Activated B cell treated with CpG ODN at 0.5 μM for 24 hours (primary cell): ENCODE measurements at regions of chr5 and their contacts with region 1.

Region 1: DNA sequence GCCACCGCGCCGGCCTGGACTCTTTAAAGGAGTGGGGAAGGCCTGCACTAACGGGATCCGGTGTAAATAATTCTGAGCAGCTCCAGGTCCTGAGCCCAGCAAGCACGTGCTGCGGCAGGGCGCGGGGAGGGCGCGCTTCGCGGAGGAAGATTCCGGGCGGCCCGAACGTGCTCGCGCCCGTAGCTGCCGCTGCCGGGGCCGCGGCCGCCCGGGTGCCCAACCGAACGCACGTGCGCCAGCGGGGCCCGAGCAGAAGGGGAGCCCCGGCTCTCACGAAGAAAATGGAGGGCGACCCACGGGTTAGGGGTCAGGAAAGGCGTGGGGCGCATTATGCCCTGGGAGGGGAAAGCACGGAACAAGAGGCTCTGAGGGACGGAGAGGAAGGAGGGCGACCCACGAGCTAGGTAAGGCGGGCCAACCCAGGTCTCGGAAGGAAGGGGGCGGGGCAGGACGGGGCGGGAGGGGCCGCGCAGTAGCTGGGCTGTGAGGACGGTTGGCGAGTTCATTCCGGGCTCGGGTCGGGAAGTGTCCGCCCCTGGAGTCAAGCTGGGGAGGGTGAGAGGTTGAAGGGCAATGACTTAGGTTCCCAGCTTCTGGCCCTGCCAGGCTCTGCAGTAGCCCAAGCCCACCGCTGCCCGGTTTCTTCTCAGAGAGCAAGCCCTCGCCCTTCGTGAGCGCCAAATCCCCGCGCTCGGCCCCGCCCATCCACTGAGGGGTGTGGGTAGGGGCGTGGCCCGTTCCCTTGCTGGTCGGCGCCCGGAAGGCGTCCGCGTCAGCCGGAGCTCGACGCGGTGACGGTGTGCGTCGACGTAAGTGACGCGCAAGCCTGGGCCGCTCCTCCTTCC is at the start of gene ZNF131:
- DNase-seq: peak; percentile 99
- ATAC-seq: peak; percentile 86
- H3K4me3 Mint-ChIP-seq: peak within 1 kb of the TSS; percentile 90
- H3K27ac Mint-ChIP-seq: peak within 1 kb of the TSS; percentile 94
- H3K4me1 Mint-ChIP-seq: peaks cover 38% of the 10 kb centered on the region
- H3K27me3 Mint-ChIP-seq: no peaks in the 10 kb centered on the region
- CTCF ChIP-seq: no peak
- total RNA-seq, gene ZNF131: 50.8 and 57.6 TPM in 2 replicates

Region 2: DNA sequence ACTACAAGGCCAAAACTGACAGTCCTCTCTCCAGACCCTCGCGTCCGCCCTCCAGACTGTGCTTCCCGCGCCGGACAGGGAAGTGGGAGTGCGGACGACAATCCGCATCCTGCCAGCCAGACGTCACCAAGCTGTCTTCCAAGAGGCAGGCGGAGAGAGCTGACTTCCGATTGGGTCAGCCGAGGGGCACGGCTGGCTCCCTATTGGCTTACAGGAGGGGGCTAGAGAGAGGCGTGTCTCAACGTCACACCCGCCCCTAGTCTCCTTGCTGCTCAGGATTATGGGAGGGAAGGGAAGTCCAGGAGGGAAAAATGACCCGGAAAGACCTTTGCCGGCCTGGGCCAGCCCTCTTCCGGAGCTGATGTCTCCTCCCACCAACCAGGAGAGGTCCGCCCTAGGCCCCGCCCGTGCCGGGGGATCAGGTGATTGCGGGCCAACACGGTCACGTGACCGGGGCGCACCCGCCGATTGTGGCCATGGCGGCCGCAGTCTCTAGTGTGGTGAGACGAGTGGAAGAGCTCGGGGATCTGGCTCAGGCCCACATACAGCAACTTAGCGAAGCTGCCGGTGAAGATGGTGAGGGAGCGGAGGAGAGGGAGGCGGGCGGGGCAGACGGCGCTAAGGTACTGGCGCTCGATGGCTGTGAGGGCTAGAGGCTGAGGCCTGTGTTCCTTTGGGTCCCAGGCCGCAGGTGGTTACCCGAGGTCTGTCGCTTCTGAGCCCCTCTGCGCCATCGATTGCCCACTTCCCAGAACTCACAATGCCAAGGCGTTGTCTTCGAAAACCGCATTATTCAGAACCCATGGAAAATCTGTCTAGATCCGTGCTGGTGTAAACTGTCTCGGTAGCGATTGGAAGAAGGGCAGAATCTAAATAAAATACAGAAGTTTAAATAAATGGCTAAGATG is 1216.8 kb before region 1 on chr5 and contains the start of gene RIMOC1:
- CTCF ChIA-PET with region 1: no interaction called
- POLR2A ChIA-PET with region 1: interaction called, 19 read pairs
- intact Hi-C with region 1: loop called (anchors 1 kb)
- DNase-seq: peak; percentile 97
- ATAC-seq: peak; percentile 92
- H3K4me3 Mint-ChIP-seq: peak within 1 kb of the TSS; percentile 99
- H3K27ac Mint-ChIP-seq: peak within 1 kb of the TSS; percentile 99
- H3K4me1 Mint-ChIP-seq: peaks cover 34% of the 10 kb centered on the region
- H3K27me3 Mint-ChIP-seq: peaks cover 4% of the 10 kb centered on the region
- CTCF ChIP-seq: no peak
- total RNA-seq, gene RIMOC1: 26.0 and 30.2 TPM in 2 replicates

Region 3: DNA sequence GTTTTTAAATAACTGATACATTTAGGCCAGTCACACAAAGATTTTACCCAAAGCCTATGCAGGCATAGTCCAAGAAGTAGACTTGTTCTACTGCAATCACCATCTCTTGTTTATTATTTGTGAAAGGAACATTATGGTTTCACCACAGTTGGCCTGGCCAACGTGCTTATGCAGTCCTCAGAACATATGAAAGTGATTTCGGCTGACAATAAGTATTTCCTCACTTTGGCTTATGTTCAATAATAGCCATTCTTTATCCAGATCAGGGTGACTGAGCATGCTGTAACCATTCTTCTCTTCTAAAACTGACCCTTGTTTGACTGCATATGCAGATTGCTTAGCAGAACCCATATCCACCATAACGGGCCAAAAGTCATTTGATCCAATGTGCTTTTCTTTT is 440.9 kb before region 1 on chr5:
- CTCF ChIA-PET with region 1: no interaction called
- POLR2A ChIA-PET with region 1: no interaction called
- intact Hi-C with region 1: no loop called
- DNase-seq: no peak
- ATAC-seq: no peak
- H3K4me3 Mint-ChIP-seq: no peak overlapping the region
- H3K27ac Mint-ChIP-seq: no peak overlapping the region
- H3K4me1 Mint-ChIP-seq: no peaks in the 10 kb centered on the region
- H3K27me3 Mint-ChIP-seq: no peaks in the 10 kb centered on the region
- CTCF ChIP-seq: no peak

Region 4: GRCh38 chr5:42950440-42951292 is 170.3 kb before region 1 on chr5:
- CTCF ChIA-PET with region 1: no interaction called
- POLR2A ChIA-PET with region 1: interaction called, 44 read pairs
- intact Hi-C with region 1: loop called (anchors 1 kb)
- DNase-seq: no peak
- ATAC-seq: peak; percentile 48
- H3K4me3 Mint-ChIP-seq: peak overlapping the region; percentile 94
- H3K27ac Mint-ChIP-seq: peak overlapping the region; percentile 98
- H3K4me1 Mint-ChIP-seq: peaks cover 33% of the 10 kb centered on the region
- H3K27me3 Mint-ChIP-seq: no peaks in the 10 kb centered on the region
- CTCF ChIP-seq: no peak

Region 5: DNA sequence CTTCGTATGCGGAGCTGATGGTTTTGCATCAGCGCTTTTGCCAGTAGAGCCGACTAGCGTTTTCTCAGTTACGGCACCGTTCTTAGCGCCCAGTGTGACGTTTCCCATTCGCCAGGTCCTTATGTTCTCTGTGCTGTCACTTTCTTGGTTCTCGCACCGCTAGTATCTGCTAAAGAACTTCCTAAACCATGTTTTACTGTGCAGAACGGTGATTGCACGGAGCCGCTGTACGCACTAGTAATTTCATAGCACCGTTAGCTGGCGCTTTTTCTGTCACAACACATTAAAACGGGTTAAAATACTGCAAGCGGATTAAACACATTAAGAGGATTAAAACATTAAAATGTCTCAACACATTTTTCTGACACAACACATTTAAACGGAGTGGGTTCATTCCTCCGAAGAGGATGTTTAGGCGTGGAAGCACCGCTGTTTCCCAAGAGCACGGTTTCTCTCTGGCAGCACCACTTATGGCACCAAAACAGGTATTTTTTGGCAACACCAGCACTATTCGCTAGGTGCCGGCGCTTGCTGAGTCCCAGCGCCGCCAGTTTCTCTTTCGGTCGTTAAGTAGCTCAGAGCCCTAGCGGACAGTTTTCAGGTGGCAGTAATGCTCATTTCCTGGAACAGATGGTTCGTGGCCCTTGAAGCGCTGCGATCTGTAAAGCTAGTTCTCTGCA is 101.2 kb before region 1 on chr5:
- CTCF ChIA-PET with region 1: interaction called, 4 read pairs
- POLR2A ChIA-PET with region 1: interaction called, 73 read pairs
- intact Hi-C with region 1: loop called (anchors 1 kb)
- DNase-seq: peak; percentile 61
- ATAC-seq: peak; percentile 64
- H3K4me3 Mint-ChIP-seq: peak overlapping the region; percentile 97
- H3K27ac Mint-ChIP-seq: peak overlapping the region; percentile 100
- H3K4me1 Mint-ChIP-seq: peaks cover 39% of the 10 kb centered on the region
- H3K27me3 Mint-ChIP-seq: no peaks in the 10 kb centered on the region
- CTCF ChIP-seq: no peak

Region 6: DNA sequence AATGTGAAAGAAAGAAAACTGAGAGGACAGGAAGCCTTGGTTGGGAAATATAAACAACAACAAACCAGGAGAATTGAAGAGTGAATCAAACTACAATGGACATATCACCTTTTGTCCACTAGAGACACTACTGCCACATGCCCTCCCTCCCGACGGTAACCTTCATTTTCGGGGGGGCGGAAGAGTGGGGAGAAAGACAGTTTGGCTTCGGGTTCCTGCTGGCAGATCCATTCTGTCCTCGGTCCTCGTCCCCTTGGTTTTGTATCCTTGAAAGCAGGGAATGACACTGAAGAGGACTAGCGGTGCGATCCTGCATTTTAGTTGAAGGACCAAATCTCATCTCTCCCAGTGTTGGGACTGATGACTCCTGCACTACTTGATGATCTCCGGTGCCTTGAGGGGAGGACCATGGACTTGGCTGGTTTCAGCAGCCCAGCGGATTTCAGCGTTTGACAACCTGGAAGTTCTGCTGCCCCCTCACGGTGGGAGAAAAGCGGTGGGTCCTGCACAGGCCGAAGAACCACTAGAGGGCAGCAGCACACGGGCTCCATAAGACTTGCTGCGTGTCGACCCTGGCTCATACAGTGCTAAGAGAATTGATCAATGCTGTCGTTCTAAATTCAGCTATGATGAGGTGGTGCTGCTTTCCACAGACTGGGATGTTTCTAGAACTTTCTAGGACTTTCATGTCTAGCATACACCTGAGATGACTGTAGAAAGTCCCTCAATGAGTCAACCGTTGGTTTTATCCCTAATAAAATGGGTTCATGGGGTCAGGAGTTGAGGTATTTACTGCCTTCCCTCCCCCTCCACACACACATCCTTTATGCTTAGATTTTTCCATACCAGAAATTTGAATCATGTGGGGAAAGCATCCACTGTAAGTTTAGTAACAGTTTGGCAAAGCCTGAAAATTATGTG is 15.3 kb before region 1 on chr5:
- CTCF ChIA-PET with region 1: interaction called, 33 read pairs
- POLR2A ChIA-PET with region 1: interaction called, 27 read pairs
- intact Hi-C with region 1: loop called (anchors 1 kb)
- DNase-seq: peak; percentile 73
- ATAC-seq: peak; percentile 99
- H3K4me3 Mint-ChIP-seq: peak overlapping the region; percentile 83
- H3K27ac Mint-ChIP-seq: peak overlapping the region; percentile 80
- H3K4me1 Mint-ChIP-seq: peaks cover 7% of the 10 kb centered on the region
- H3K27me3 Mint-ChIP-seq: peaks cover 2% of the 10 kb centered on the region
- CTCF ChIP-seq: peak; percentile 100

Region 7: DNA sequence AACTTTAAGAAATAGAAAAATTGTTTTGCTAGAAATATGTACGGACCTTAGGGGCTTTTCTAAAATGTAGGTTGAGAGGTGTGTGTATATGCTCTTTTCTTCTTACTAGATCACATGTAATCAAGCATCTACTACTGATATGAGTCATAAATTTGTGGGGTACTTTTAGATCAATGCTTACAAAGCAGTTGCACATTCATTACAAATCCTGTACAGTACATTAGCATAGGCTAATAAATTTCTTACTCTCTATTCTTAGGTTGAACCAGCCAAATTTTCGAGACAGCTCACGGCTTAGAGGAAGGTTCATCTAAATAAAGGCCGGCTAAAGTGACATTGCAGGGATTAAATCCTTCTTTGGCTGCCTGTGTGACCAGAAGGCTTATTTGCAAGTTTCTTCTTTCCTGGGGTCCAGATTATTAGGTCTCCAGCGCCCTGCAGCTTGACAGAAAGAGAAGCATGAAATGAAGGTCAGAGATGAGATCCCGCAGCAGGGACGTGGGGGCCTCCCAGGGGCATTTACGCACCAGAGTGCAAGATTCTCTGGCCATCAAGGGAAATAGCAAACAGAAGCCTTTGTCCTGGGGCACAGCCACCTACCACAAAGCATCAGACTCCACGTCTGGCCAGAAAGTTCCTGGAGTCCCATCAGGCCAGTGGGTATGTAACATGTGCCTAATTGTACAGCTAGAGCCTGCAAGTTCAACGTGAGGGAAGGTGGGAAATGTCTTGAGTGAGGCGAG is 124.1 kb after region 1 on chr5:
- CTCF ChIA-PET with region 1: no interaction called
- POLR2A ChIA-PET with region 1: no interaction called
- intact Hi-C with region 1: no loop called
- DNase-seq: no peak
- ATAC-seq: no peak
- H3K4me3 Mint-ChIP-seq: no peak overlapping the region
- H3K27ac Mint-ChIP-seq: no peak overlapping the region
- H3K4me1 Mint-ChIP-seq: no peaks in the 10 kb centered on the region
- H3K27me3 Mint-ChIP-seq: peaks cover 41% of the 10 kb centered on the region
- CTCF ChIP-seq: no peak

Region 8: DNA sequence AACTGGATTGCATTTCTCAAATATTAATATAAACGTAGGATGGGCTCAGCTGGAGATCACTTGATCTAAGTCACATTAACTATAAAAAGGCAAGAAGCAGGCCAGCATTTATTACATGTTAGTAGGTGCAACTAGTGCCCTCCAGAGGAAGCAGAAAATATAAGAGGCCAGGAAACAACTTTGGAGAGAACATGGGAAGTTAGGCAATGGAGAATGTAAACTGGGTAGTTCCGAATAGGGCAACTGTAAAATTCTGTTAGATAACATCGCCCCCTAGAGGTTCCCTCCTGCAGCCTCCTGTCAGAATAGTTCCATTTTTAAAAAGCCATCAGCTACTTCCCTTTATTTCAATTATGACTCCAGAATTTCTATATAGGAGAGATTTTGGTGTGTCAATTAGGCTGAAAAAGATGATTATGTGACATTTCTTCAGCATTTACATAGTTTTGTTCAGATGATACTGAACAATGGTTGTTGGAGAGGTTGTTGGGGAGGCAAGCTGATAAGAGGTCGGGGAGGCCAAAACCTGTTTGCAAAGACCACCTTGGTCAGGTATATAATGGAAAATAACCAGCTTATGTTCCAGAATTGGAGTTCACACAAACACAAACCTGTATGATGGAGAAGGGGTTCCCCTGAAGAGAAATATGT is 268.9 kb after region 1 on chr5:
- CTCF ChIA-PET with region 1: interaction called, 10 read pairs
- POLR2A ChIA-PET with region 1: interaction called, 6 read pairs
- intact Hi-C with region 1: no loop called
- DNase-seq: no peak
- ATAC-seq: peak; percentile 84
- H3K4me3 Mint-ChIP-seq: no peak overlapping the region
- H3K27ac Mint-ChIP-seq: peak overlapping the region; percentile 30
- H3K4me1 Mint-ChIP-seq: peaks cover 16% of the 10 kb centered on the region
- H3K27me3 Mint-ChIP-seq: no peaks in the 10 kb centered on the region
- CTCF ChIP-seq: peak; percentile 64

Region 9: DNA sequence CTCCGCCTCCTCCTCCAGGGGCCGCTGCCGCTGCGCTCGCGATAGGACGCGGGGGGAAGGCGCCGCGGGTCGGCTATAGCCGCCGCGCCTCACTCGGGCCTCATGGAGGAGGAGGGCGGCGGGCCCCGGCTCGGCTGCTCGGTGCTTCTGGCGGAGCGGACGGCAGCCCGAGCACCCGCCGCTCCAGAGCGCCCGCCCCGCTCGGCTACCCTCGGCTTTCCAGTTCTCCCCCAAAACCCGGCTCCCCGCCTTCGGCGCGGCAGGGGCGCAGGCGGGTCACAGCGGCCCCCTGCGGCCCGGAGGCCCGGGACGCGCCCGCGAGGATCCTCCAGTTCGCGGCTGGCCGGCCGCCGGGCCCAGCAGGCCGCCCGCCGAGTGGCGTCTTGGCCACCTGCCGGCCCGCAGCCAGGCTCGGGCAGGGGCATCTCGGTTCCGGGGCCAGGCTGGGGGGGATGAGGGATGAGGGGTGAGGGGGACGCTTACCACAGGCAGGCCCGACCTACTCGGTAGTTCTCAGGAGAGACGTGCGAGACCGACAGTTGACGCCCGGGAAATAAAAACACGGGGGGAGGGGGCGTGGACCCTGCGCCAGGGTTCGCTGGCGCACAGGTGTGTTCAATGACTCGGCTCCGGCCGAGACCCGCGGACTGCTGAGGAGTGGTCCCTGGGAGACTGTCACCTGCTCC is 436.1 kb after region 1 on chr5 and contains the start of gene PAIP1:
- CTCF ChIA-PET with region 1: no interaction called
- POLR2A ChIA-PET with region 1: interaction called, 9 read pairs
- intact Hi-C with region 1: loop called (anchors 1 kb)
- DNase-seq: peak; percentile 90
- ATAC-seq: peak; percentile 93
- H3K4me3 Mint-ChIP-seq: peak within 1 kb of the TSS; percentile 89
- H3K27ac Mint-ChIP-seq: peak within 1 kb of the TSS; percentile 94
- H3K4me1 Mint-ChIP-seq: peaks cover 21% of the 10 kb centered on the region
- H3K27me3 Mint-ChIP-seq: no peaks in the 10 kb centered on the region
- CTCF ChIP-seq: peak; percentile 41
- total RNA-seq, gene PAIP1: 35.1 and 38.3 TPM in 2 replicates